Activated naive CD4-positive, alpha-beta T cell treated with anti-CD3 and anti-CD28 coated beads for 36 hours (primary cell): ENCODE measurements at regions of chr11 and their contacts with region 1.

Region 1: DNA sequence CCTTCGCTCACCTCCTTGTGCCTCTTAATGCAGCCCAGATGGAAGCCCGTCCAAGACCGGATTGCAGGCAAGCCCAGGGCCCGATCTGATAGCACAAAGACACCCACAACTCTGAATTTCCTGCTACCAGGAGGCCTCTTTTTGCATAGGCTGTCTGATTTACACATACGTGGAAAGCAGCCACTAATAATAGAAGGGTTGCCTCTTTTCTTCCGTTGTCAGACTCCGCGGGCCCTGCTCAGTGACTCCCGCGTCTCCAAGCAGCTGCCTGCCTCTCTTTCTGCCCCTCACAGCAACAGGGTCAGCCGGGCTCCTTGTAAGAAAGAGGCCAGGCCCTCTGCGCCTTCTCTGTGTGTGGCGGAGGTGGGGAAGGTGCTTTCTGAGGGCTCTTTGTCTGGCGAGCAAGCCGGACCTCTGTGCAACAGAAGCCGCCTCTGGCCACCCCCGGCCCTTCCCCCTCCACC is 26.7 kb downstream of the FLI1 start:
- DNase-seq: peak; percentile 72
- H3K4me3 Mint-ChIP-seq: peak overlapping the region; percentile 73
- H3K27ac Mint-ChIP-seq: peak overlapping the region; percentile 87
- H3K4me1 Mint-ChIP-seq: peaks cover 97% of the 10 kb centered on the region
- H3K27me3 Mint-ChIP-seq: no peaks in the 10 kb centered on the region

Region 2: GRCh38 chr11:128610721-128611617 is 109.6 kb before region 1 on chr11:
- CTCF ChIA-PET with region 1: no interaction called
- intact Hi-C with region 1: no loop called
- DNase-seq: peak; percentile 62
- H3K4me3 Mint-ChIP-seq: peak overlapping the region; percentile 56
- H3K27ac Mint-ChIP-seq: peak overlapping the region; percentile 86
- H3K4me1 Mint-ChIP-seq: peaks cover 49% of the 10 kb centered on the region
- H3K27me3 Mint-ChIP-seq: no peaks in the 10 kb centered on the region

Region 3: DNA sequence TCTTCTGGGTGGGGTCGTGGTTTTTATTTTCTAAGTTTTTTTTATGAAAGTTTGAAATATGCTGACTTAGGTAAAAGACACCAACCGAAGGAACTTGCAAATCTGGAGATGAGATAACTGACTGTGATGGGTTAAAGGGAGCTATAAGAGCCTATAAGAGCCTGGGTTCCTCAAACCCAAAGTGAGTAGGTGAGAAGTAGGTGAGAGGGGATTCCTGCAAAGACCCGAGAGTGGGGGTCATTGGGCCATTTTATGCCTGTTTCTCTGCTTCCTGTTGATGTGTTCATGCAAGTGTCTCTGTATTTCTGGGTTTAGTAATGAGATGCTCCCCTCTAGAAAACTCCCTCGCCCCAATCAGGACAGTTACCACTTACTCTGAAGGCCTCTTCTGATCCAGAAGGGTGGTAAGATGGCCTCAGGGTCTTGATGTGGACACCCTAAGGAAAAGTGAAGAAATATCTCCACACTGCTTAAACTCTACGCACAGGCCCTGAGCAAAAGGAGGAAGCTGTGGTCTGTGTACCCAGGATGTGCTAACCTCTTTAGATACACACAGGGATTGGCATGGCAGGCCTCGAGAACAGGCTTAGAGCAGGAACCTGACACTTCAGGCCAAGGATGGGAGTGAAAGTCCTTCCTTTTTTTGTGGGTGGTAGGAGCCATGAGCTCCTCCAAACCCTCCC is 24.9 kb before region 1 on chr11:
- CTCF ChIA-PET with region 1: no interaction called
- intact Hi-C with region 1: loop called (anchors 1 kb)
- DNase-seq: peak; percentile 58
- H3K4me3 Mint-ChIP-seq: peak overlapping the region; percentile 90
- H3K27ac Mint-ChIP-seq: peak overlapping the region; percentile 94
- H3K4me1 Mint-ChIP-seq: peaks cover 54% of the 10 kb centered on the region
- H3K27me3 Mint-ChIP-seq: peaks cover 7% of the 10 kb centered on the region

Region 4: GRCh38 chr11:128701086-128701485 is 19.5 kb before region 1 on chr11:
- CTCF ChIA-PET with region 1: interaction called, 5 read pairs
- intact Hi-C with region 1: loop called (anchors 1 kb)
- DNase-seq: no peak
- H3K4me3 Mint-ChIP-seq: no peak overlapping the region
- H3K27ac Mint-ChIP-seq: peak overlapping the region; percentile 16
- H3K4me1 Mint-ChIP-seq: peaks cover 93% of the 10 kb centered on the region
- H3K27me3 Mint-ChIP-seq: no peaks in the 10 kb centered on the region